ENCODE measurements at regions of chr19 and their contacts with region 1.

Region 1: DNA sequence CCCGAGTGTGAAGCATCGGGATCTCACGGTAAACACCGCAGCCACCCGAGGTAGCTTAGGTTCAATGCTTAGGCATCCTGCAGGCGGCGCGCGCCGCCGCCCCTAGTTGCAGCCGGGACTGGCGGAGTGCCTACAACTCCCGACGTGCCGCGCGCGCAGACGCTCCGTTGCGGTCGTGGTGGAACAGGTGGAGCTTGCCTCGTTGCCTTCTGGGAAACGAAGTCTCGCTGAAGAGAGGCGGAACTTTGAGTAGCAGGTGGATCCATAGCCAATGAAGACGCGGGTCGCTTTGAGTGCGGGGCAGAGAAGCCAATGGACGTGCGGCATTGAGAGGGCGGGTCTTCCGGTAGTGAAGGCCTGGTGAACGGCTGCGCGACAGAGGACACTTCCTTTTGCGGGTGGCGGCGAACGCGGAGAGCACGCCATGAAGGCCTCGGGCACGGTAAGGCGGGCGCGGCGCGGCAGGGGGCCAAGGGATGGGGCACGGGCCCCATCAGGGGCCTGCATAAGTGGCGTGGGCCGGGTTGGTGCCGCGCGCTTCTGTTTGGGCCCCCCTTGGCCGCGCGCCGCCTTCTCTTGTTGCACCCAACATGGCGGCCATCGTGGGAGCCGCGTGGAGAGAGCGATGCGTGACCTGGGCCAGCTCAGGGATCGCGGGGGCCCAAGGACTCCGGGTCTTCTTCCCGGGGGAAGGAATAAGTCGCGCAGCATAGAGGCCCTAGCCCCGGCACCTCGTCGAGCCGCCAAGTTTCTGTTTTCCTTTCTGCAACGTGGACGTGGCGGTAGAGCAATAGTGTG is at the start of gene RPL18A:
- DNase-seq: peak; percentile 99
- ATAC-seq: peak; percentile 98
- H3K4me3 ChIP-seq: peak within 1 kb of the TSS; percentile 31 to 83
- H3K27ac ChIP-seq: peak within 1 kb of the TSS in 1 of 2 donors; percentile 2
- H3K4me1 ChIP-seq: peaks cover 2 to 6% of the 10 kb centered on the region in 2 donors
- H3K27me3 ChIP-seq: no peaks in the 10 kb centered on the region
- total RNA-seq, gene RPL18A: 1,221 to 1,276 TPM

Region 2: DNA sequence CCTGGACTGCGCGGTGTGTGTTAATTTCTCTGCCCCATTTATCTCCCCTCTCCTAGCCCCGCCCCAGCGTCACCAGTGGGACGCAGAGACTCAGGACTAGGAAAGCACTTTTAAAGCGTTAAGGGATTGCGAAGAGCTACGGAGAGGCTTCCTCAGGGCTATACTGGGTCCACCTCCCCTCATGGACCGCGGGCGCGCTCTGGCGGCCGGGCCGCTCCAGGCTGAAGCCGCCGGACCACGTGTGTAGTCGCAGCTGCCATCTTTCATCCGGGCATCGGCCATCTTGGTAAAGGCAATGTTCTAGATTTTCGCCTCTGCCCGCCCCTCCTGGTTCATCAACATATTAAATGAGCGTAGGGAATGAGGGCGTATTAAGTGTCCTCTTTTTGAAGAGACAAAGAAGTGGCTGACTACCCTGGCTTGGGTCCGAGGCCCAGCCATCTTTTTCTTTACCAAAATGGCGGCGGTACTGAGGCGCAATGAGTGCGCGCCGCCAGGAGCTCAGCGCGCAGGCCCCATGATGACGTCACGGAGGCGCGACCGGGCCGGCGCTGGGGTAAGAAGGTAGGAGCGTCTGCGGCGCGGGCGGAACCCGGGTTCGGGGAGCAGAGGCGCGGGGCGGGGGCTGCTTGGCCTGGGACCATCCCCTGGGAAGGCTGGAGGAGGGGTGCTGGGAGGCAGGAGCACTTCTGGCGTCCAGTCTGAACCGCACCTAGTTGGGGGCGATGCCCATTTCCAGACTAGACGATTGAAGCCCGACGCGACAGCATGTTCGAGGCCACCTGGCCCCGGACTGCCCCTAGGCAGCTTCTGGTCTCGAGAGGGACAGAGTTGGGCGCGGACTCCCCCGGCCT is 73.0 kb after region 1 on chr19 and contains the start of gene CCDC124:
- intact Hi-C with region 1: loop called in 1 of 2 experiments (anchors 2 kb)
- DNase-seq: peak; percentile 93 to 97
- ATAC-seq: peak; percentile 97
- H3K4me3 ChIP-seq: peak within 1 kb of the TSS; percentile 9 to 70
- H3K27ac ChIP-seq: peak within 1 kb of the TSS in 1 of 2 donors; percentile 33
- H3K4me1 ChIP-seq: no peaks in the 10 kb centered on the region
- H3K27me3 ChIP-seq: no peaks in the 10 kb centered on the region
- total RNA-seq, gene CCDC124: 48.9 to 58.7 TPM